H1 (cell line): ENCODE measurements at regions of chr3 and their contacts with region 1.

Region 1: DNA sequence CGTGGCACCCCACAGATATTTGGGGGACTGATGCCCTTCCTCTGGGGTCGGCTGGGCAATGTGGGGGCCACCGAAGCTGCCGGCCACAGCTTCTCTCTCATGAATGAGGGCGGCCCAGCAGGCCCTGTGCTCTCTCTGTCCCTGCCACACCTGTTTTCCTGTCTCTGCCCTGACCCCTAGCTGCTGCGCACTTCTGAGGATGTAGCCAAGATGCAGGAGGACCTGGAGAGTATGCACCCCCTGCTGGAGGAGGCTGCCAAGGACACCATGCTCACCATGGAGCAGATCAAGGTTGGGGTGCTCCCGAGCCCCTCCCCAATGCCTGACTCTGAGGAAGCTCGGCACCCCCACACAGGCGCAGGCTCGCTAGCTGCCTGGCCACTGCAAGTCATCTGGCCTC is 59.7 kb downstream of the SEMA3G start:
- DNase-seq: peak; percentile 81 to 85
- H3K4me3 ChIP-seq: no peak overlapping the region
- H3K27ac ChIP-seq: no peak overlapping the region
- H3K4me1 ChIP-seq: peaks cover 0 to 3% (median under 1%) of the 10 kb centered on the region in 4 experiments; a peak in 3 of 7 replicates
- H3K27me3 ChIP-seq: no peaks in the 10 kb centered on the region
- CTCF ChIP-seq: peak in 2 of 3 experiments; percentile 99 to 100; a peak in 3 of 4 replicates
- EP300 ChIP-seq: no peak
- POLR2A ChIP-seq: no peak
- RAD21 ChIP-seq: peak; percentile 78 to 88

Region 2: GRCh38 chr3:52225452-52226228 is 159.5 kb before region 1 on chr3 and contains the start of gene TLR9:
- CTCF ChIA-PET with region 1: interaction called, 67 read pairs
- POLR2A ChIA-PET with region 1: interaction called, 3 read pairs
- DNase-seq: peak in 1 of 2 experiments; percentile 45
- H3K4me3 ChIP-seq: no peak within 1 kb of the TSS
- H3K27ac ChIP-seq: no peak within 1 kb of the TSS
- H3K4me1 ChIP-seq: peaks cover 0 to 4% (median 2%) of the 10 kb centered on the region in 4 experiments; a peak in 5 of 7 replicates
- H3K27me3 ChIP-seq: no peaks in the 10 kb centered on the region
- CTCF ChIP-seq: no peak
- EP300 ChIP-seq: no peak
- POLR2A ChIP-seq: no peak
- RAD21 ChIP-seq: no peak
- total RNA-seq, gene TLR9: not detected in 2 replicates

Region 3: DNA sequence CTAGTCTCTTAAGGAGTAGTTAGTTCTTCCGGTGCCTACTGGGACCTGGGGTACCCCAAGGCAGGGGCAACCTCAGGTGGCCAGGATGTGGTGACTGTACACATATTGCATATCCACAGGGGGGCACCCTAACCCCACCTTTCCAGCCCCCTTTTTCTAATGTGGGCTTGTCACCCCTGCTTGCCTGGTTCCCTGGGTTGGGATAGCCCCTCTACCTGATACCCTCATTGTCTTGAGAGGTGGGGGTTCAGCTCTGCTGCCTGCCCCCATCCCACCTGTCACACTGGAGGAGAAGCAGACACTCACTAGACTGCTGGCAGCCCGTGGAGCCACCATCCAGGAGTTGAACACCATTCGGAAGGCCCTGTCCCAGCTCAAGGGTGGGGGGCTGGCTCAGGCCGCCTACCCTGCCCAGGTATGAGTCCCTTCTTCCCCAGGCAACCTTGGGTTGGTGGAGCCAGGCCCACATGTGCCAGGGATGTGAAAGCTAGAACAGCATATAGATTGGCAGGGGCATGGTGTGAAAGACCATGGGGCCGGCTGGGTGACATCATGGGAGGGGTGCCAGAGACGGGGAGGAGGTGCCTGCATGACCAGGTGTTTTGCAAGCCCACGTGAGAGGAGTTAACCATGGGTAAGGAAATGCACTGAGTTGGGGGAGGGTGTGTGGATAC is 93.5 kb before region 1 on chr3:
- CTCF ChIA-PET with region 1: interaction called, 198 read pairs
- POLR2A ChIA-PET with region 1: interaction called, 3 read pairs
- DNase-seq: peak in 1 of 2 experiments; percentile 80
- H3K4me3 ChIP-seq: no peak overlapping the region
- H3K27ac ChIP-seq: no peak overlapping the region
- H3K4me1 ChIP-seq: peaks cover 0 to under 1% (median 0%) of the 10 kb centered on the region in 4 experiments; a peak in 3 of 7 replicates
- H3K27me3 ChIP-seq: no peaks in the 10 kb centered on the region
- CTCF ChIP-seq: peak in 2 of 3 experiments; percentile 64 to 82; a peak in 3 of 4 replicates
- EP300 ChIP-seq: no peak
- POLR2A ChIP-seq: no peak
- RAD21 ChIP-seq: peak; percentile 89 to 92

Region 4: GRCh38 chr3:52323526-52324295 is 61.4 kb before region 1 on chr3:
- CTCF ChIA-PET with region 1: interaction called, 20 read pairs
- POLR2A ChIA-PET with region 1: no interaction called
- DNase-seq: no peak
- H3K4me3 ChIP-seq: no peak overlapping the region
- H3K27ac ChIP-seq: no peak overlapping the region
- H3K4me1 ChIP-seq: no peaks in the 10 kb centered on the region
- H3K27me3 ChIP-seq: peaks cover 0 to 5% (median 4%) of the 10 kb centered on the region in 4 experiments; a peak in 4 of 7 replicates
- CTCF ChIP-seq: no peak
- EP300 ChIP-seq: no peak
- POLR2A ChIP-seq: no peak
- RAD21 ChIP-seq: no peak; a peak in 1 of 4 replicates

Region 5: GRCh38 chr3:52346623-52347530 is 38.3 kb before region 1 on chr3:
- CTCF ChIA-PET with region 1: interaction called, 165 read pairs
- POLR2A ChIA-PET with region 1: interaction called, 4 read pairs
- DNase-seq: no peak
- H3K4me3 ChIP-seq: no peak overlapping the region
- H3K27ac ChIP-seq: no peak overlapping the region
- H3K4me1 ChIP-seq: no peaks in the 10 kb centered on the region
- H3K27me3 ChIP-seq: no peaks in the 10 kb centered on the region; a peak in 1 of 7 replicates
- CTCF ChIP-seq: no peak
- EP300 ChIP-seq: no peak
- POLR2A ChIP-seq: no peak
- RAD21 ChIP-seq: no peak

Region 6: GRCh38 chr3:52400275-52400793 is 15.2 kb after region 1 on chr3:
- CTCF ChIA-PET with region 1: interaction called, 150 read pairs
- POLR2A ChIA-PET with region 1: interaction called, 26 read pairs
- DNase-seq: no peak
- H3K4me3 ChIP-seq: no peak overlapping the region
- H3K27ac ChIP-seq: no peak overlapping the region
- H3K4me1 ChIP-seq: no peaks in the 10 kb centered on the region
- H3K27me3 ChIP-seq: no peaks in the 10 kb centered on the region
- CTCF ChIP-seq: no peak
- EP300 ChIP-seq: no peak
- POLR2A ChIP-seq: no peak
- RAD21 ChIP-seq: no peak

Region 7: DNA sequence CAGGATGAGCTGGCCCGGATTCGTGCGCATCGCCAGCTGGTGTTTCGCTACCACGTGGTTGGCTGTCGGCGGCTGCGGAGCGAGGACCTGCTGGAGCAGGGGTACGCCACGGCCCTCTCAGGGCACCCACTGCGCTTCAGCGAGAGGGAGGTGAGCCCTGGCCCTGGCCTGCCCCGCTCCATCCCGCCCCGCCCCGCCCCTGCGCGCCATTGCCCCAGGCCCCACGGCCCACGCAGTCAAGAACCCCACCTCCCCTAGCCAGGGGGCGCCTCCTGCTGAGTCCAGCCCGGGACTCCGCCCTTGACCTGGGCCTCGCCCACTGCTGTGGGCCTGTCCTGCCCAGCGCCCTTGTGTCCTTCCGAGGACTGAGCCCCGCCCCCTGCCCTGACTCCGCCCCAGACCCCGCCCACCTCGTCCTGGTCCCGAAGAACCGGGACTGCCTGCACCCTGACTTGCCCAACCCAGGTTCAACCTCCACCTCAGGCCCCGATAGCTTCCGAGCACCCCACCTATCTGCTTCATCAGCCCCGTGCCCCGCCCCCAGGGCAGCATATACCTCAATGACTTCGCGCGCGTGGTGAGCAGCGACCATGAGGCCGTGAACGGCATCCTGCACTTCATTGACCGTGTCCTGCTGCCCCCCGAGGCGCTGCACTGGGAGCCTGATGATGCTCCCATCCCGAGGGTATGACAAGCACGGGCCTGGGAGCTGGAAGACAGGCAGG is 133.7 kb after region 1 on chr3:
- CTCF ChIA-PET with region 1: interaction called, 14 read pairs
- POLR2A ChIA-PET with region 1: no interaction called
- DNase-seq: peak in 1 of 2 experiments; percentile 84
- H3K4me3 ChIP-seq: peak overlapping the region; percentile 31 to 60 (median 34)
- H3K27ac ChIP-seq: no peak overlapping the region
- H3K4me1 ChIP-seq: peaks cover 0 to 6% (median 4%) of the 10 kb centered on the region in 4 experiments; a peak in 5 of 7 replicates
- H3K27me3 ChIP-seq: peaks cover 0 to 11% (median 4%) of the 10 kb centered on the region in 4 experiments; a peak in 5 of 7 replicates
- CTCF ChIP-seq: no peak
- EP300 ChIP-seq: no peak
- POLR2A ChIP-seq: no peak
- RAD21 ChIP-seq: no peak